Mammary epithelial cell (primary cell): ENCODE measurements at regions of chr11 and their contacts with region 1.

Region 1: GRCh38 chr11:114664641-114665040 is 13.7 kb upstream of the NXPE2 start:
- DNase-seq: no peak
- H3K4me3 ChIP-seq: no peak overlapping the region
- H3K27ac ChIP-seq: no peak overlapping the region
- H3K4me1 ChIP-seq: no peaks in the 10 kb centered on the region
- H3K27me3 ChIP-seq: no peaks in the 10 kb centered on the region
- CTCF ChIP-seq: no peak

Region 2: GRCh38 chr11:115760461-115761320 is 1096.0 kb after region 1 on chr11:
- CTCF ChIA-PET with region 1: interaction called, 10 read pairs
- dilution Hi-C with region 1: no loop called
- in situ Hi-C with region 1: no loop called
- intact Hi-C with region 1: no loop called
- DNase-seq: no peak
- H3K4me3 ChIP-seq: peak overlapping the region; percentile 50 to 58 (median 51)
- H3K27ac ChIP-seq: no peak overlapping the region
- H3K4me1 ChIP-seq: peaks cover 11% of the 10 kb centered on the region
- H3K27me3 ChIP-seq: peaks cover 4% of the 10 kb centered on the region
- CTCF ChIP-seq: no peak